ENCODE measurements at regions of chr13 and their contacts with region 1.

Region 1: DNA sequence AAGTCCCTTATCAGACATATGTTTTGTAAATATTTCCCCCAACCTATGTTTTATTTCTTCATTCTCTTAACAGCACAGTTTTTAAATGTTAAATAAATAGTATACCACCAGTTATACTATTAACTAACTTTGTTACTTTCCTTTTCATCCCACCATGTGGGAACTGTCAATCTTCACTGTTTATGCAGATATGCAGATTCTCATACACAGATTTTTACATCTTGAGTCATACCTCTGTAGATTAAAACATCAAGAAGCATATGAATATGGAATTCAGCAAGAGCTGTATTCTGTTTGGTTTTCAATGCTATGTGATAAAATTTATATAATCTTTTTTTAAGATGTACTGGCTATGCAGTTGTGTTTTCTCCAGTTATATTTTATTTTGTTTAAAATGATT is 566.3 kb downstream of the LIG4 start:
- DNase-seq: no peak
- H3K4me3 ChIP-seq: no peak overlapping the region
- H3K27ac ChIP-seq: no peak overlapping the region
- H3K4me1 ChIP-seq: no peaks in the 10 kb centered on the region
- H3K27me3 ChIP-seq: no peaks in the 10 kb centered on the region
- CTCF ChIP-seq: no peak

Region 2: DNA sequence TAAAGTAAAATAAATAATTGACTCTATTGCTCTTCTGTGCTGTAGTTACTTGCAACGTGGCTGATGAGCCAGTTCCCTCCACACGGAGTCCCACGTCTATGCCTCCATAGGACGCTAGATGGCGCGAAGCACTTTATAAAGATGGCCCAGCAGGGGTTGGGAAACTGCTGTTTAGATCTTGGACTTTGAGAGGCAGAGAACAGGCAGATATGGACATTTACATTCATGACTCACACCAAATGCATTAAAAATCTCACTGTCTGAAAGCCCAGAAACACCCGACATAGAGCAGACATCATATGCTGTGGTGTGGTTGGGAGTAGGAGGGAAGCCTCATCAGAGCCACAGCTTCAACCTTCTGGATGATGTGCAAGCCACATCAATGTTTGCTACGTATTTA is 438.0 kb before region 1 on chr13:
- intact Hi-C with region 1: loop called (anchors 5 kb)
- DNase-seq: peak; percentile 83 to 85
- H3K4me3 ChIP-seq: no peak overlapping the region
- H3K27ac ChIP-seq: no peak overlapping the region
- H3K4me1 ChIP-seq: peaks cover 0 to 8% (median 0%) of the 10 kb centered on the region in 4 donors
- H3K27me3 ChIP-seq: peaks cover 0 to 3% of the 10 kb centered on the region in 2 donors
- CTCF ChIP-seq: peak; percentile 75 to 88

Region 3: GRCh38 chr13:107284173-107284572 is 364.9 kb before region 1 on chr13:
- intact Hi-C with region 1: no loop called
- DNase-seq: no peak
- H3K4me3 ChIP-seq: no peak overlapping the region
- H3K27ac ChIP-seq: no peak overlapping the region
- H3K4me1 ChIP-seq: no peaks in the 10 kb centered on the region
- H3K27me3 ChIP-seq: no peaks in the 10 kb centered on the region
- CTCF ChIP-seq: no peak

Region 4: GRCh38 chr13:107373551-107373950 is 275.5 kb before region 1 on chr13:
- intact Hi-C with region 1: loop called (anchors 5 kb)
- DNase-seq: no peak
- H3K4me3 ChIP-seq: no peak overlapping the region
- H3K27ac ChIP-seq: no peak overlapping the region
- H3K4me1 ChIP-seq: peaks cover 0 to 10% (median 0%) of the 10 kb centered on the region in 4 donors
- H3K27me3 ChIP-seq: no peaks in the 10 kb centered on the region
- CTCF ChIP-seq: peak; percentile 44 to 62

Region 5: DNA sequence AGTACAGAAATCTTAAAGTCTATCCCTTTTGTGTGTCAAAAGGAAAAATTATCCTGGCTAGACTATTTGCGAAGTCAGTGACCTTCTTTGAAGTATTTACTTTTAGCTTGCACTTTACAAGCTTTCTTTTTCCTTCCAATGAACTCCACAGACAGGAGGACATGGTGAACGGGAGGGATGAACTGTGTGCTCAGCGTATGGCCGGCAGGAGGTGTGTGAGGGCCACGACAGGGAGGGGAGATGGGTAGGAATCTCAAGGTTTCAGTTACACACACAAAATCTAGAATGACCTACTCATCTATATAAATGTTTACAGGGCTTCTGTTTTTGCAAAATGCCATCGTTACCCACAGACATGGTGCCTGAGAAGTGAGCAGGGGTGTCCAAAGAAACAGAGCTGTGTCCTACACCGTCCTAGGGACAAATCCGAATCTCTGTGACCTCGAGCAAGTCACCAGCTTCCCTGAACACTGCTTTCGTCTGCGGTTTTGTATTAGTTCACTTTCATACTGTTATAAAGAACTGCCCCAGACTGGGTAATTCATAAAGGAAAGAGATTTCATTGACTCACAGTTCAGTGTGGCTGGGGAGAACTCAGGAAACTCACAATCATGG is 29.1 kb after region 1 on chr13:
- intact Hi-C with region 1: no loop called
- DNase-seq: no peak
- H3K4me3 ChIP-seq: no peak overlapping the region
- H3K27ac ChIP-seq: no peak overlapping the region
- H3K4me1 ChIP-seq: no peaks in the 10 kb centered on the region
- H3K27me3 ChIP-seq: no peaks in the 10 kb centered on the region
- CTCF ChIP-seq: no peak